ENCODE measurements at regions of chrX and their contacts with region 1.

Region 1: GRCh38 chrX:38166478-38167083 is 54.1 kb downstream of the SRPX start:
- DNase-seq: no peak
- ATAC-seq: no peak
- H3K4me3 ChIP-seq: no peak overlapping the region
- H3K27ac ChIP-seq: no peak overlapping the region
- H3K4me1 ChIP-seq: no peaks in the 10 kb centered on the region
- H3K27me3 ChIP-seq: no peaks in the 10 kb centered on the region
- CTCF ChIP-seq: peak; percentile 44; the same call in 1 of the 2 replicates

Region 2: GRCh38 chrX:37921758-37922157 is 244.8 kb before region 1 on chrX:
- CTCF ChIA-PET with region 1: no interaction called
- POLR2A ChIA-PET with region 1: no interaction called
- in situ Hi-C with region 1: no loop called
- intact Hi-C with region 1: loop called (anchors 2 kb)
- DNase-seq: no peak
- ATAC-seq: no peak
- H3K4me3 ChIP-seq: no peak overlapping the region
- H3K27ac ChIP-seq: no peak overlapping the region
- H3K4me1 ChIP-seq: no peaks in the 10 kb centered on the region
- H3K27me3 ChIP-seq: no peaks in the 10 kb centered on the region
- CTCF ChIP-seq: no peak

Region 3: GRCh38 chrX:38142610-38143009 is 24.0 kb before region 1 on chrX:
- CTCF ChIA-PET with region 1: no interaction called
- POLR2A ChIA-PET with region 1: no interaction called
- in situ Hi-C with region 1: no loop called
- intact Hi-C with region 1: no loop called
- DNase-seq: no peak
- ATAC-seq: no peak
- H3K4me3 ChIP-seq: no peak overlapping the region
- H3K27ac ChIP-seq: no peak overlapping the region
- H3K4me1 ChIP-seq: no peaks in the 10 kb centered on the region
- H3K27me3 ChIP-seq: no peaks in the 10 kb centered on the region
- CTCF ChIP-seq: no peak

Measured in Panc1 (cell line).